HEK293 (cell line): ENCODE measurements at regions of chr14 and their contacts with region 1.

Region 1: DNA sequence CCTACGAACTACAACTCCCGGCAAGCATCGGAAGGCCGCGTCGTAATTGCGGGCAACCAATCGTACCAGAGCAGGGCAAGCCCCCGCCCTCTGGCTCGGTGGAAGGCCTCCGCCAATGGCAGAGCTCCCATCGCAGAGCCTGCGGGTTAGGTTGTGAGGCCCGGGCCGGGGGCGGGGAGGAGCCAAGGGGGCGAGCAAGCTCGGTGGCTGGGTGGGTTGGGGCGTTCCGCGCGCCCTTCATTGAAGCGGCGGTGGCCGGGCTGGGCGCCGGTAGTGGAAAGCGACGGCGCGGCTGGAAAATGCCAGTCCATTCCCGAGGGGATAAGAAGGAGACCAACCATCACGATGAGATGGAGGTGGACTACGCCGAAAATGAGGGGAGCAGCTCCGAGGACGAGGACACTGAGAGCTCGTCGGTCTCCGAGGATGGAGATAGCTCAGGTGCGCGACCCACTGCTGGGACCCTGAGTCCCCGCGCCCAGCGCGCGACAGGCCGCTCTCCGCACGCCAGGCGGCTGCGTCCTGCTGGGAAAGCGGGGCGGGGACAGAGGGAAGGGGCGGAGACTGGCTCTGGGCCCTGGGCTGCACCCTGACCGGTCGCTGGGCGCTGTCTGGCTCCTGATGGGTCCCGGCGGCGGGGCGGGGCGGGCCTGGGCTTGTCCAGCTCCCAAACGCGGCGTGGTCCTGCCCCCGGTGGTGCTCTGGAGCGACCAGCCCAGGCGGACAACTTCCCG is at the start of gene BRMS1L:
- H3K4me3 ChIP-seq: peak within 1 kb of the TSS; percentile 92
- H3K27ac ChIP-seq: peak within 1 kb of the TSS; percentile 97
- H3K4me1 ChIP-seq: peaks cover 2% of the 10 kb centered on the region; the same call in 1 of the 2 replicates
- CTCF ChIP-seq: peak; percentile 76

Region 2: DNA sequence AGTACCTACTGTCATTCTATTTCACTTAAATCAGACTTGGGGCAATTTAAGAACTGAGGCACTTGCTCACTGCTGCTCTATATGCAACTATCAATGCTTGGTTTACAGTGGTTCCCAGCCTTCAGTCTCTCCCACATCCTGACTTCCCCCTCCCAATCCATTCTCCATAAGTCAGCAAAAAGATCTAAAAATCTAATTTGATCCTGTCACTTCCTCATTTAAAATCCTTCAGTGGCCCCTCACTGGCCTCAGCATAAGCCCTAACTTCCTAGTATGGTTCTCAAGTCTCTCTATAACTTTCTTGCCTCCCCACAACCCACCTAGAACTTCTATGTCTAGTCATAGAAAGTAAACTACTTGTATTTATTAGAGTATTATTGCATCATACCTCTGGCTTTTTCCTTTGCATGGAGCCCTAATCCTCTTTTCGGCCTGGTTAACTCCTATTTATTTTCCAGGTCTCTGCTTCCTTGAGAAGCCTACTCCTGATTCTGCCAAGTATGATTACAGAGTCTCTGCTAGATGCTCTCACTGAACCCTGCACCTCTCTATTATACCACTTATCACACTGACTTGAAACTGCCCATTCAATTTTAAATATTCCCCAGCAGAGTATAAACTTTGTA is 147.9 kb before region 1 on chr14:
- CTCF ChIA-PET with region 1: no interaction called
- POLR2A ChIA-PET with region 1: no interaction called
- H3K4me3 ChIP-seq: no peak overlapping the region
- H3K27ac ChIP-seq: no peak overlapping the region
- H3K4me1 ChIP-seq: no peaks in the 10 kb centered on the region
- CTCF ChIP-seq: no peak

Region 3: DNA sequence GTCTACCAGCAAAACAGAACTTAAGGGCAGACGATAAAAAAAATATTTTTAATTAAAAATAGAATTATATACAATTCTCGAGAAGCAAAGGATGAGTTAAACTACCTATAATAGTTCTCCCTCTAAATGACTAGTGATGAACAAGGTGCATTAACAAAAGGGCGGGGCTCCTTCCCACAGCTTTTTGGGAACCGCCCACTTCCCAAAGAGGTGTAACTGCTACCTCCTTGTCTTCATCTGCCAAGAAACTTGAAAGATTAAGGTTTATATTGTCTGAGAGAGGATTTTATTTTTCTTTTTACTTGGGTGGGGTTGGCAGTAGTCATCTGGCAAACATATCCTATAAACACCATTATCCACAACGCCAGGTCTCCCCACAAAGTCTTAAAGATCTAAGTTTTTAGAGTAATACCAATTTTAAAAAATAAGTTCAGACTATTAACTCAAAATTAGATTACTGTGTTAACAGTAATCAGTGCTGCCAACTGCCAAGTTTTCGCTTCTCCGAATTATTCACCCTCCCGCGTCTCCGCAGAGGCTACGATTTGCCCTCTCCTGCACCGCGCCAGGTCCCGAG is 18.2 kb before region 1 on chr14:
- CTCF ChIA-PET with region 1: interaction called, 8 read pairs
- POLR2A ChIA-PET with region 1: interaction called, 25 read pairs
- H3K4me3 ChIP-seq: peak overlapping the region; percentile 84
- H3K27ac ChIP-seq: peak overlapping the region; percentile 95
- H3K4me1 ChIP-seq: peaks cover 7% of the 10 kb centered on the region; the same call in 1 of the 2 replicates
- CTCF ChIP-seq: no peak

Region 4: GRCh38 chr14:35814371-35815005 is 11.9 kb before region 1 on chr14:
- CTCF ChIA-PET with region 1: interaction called, 8 read pairs
- POLR2A ChIA-PET with region 1: interaction called, 25 read pairs
- H3K4me3 ChIP-seq: no peak overlapping the region
- H3K27ac ChIP-seq: no peak overlapping the region
- H3K4me1 ChIP-seq: no peaks in the 10 kb centered on the region
- CTCF ChIP-seq: peak; percentile 16; the same call in 1 of the 2 replicates

Region 5: DNA sequence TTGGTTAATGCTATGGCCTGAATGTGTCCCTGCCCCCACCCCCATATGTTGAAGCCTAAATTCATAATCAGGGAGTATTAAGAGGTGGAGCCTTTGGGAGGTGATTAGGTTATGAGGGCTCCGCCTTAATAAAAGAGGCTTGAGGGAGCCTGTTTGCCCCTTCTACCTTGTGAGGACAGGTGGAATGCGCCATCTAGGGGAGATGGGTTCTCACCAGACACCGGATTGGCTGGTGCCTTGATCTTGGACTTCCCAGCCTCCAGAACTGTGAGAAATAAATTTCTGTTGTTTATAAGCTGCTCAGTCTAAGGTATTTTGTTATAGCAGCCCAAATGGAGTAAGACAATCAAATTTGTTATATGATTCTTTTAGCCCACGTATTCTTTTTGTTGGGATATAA is 201.8 kb after region 1 on chr14:
- CTCF ChIA-PET with region 1: no interaction called
- POLR2A ChIA-PET with region 1: no interaction called
- H3K4me3 ChIP-seq: no peak overlapping the region
- H3K27ac ChIP-seq: no peak overlapping the region
- H3K4me1 ChIP-seq: no peaks in the 10 kb centered on the region
- CTCF ChIP-seq: no peak